ENCODE measurements at regions of chr1 and their contacts with region 1.

Region 1: GRCh38 chr1:24235921-24236781 is 49.1 kb upstream of the IFNLR1 start:
- DNase-seq: peak; percentile 24
- ATAC-seq: peak; percentile 87
- H3K4me3 ChIP-seq: peak overlapping the region in 1 of 2 experiments; percentile 19; a peak in 2 of 4 replicates
- H3K27ac ChIP-seq: peak overlapping the region; percentile 71
- H3K4me1 ChIP-seq: peaks cover 19% of the 10 kb centered on the region
- H3K27me3 ChIP-seq: no peaks in the 10 kb centered on the region
- CTCF ChIP-seq: no peak

Region 2: DNA sequence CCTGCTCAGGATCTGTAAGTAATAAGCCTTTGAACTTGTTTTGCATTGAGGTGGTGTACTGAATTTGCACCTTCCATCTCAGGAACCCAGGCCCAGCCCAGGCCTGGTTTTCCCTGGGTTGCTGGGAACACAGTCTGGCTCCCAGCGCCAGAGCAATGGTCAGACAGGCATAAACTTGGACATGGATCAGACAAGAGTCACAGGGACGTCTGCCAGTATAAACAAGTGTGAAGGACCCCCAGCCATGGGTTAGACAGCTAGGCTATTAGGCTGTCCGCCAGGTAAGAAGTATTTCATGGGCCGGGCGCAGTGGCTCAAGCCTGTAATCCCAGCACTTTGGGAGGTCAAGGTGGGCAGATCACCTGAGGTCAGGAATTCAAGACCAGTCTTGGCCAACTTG is 54.5 kb before region 1 on chr1:
- CTCF ChIA-PET with region 1: no interaction called
- POLR2A ChIA-PET with region 1: no interaction called
- in situ Hi-C with region 1: no loop called
- intact Hi-C with region 1: no loop called
- DNase-seq: no peak
- ATAC-seq: no peak
- H3K4me3 ChIP-seq: no peak overlapping the region
- H3K27ac ChIP-seq: no peak overlapping the region
- H3K4me1 ChIP-seq: peaks cover 4% of the 10 kb centered on the region; the same call in 1 of the 2 replicates
- H3K27me3 ChIP-seq: no peaks in the 10 kb centered on the region
- CTCF ChIP-seq: no peak

Region 3: DNA sequence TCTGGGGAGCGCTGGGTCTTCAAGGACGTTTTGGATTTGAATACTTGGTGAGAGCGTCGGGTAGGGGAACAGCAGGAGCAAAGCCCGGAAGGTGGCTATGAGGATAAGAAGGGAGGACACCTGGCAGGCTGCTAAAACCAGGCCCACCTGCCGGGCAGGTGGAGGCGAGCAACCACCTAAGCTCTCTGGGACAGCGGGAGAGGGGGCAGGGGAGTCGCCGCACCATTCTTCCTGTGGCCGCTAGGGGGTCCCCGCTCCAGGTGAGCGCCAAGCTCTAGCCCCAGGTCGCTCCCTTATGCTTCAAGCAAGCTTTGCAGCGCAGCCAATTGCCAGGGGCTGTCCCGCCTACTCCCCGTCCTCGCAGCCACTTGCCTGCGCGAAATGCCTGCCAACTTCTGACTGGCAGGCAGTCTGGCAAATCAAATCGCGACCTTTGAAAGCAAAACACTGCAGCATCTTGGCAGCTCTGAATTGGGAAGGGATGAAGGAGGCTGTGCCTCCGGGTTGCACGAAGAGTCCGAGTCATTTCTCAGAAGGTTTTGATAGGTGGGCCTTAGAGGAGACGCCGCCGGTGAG is 179.3 kb after region 1 on chr1 and contains the start of gene NIPAL3:
- CTCF ChIA-PET with region 1: no interaction called
- POLR2A ChIA-PET with region 1: interaction called, 16 read pairs
- in situ Hi-C with region 1: no loop called
- intact Hi-C with region 1: no loop called
- DNase-seq: peak; percentile 98
- ATAC-seq: peak; percentile 94
- H3K4me3 ChIP-seq: peak within 1 kb of the TSS; percentile 78 to 80
- H3K27ac ChIP-seq: peak within 1 kb of the TSS; percentile 80
- H3K4me1 ChIP-seq: peaks cover 27% of the 10 kb centered on the region; the same call in 1 of the 2 replicates
- H3K27me3 ChIP-seq: no peaks in the 10 kb centered on the region
- CTCF ChIP-seq: peak; percentile 97
- total RNA-seq, gene NIPAL3: 13.6 TPM

Measured in Panc1 (cell line).